Head of caudate nucleus (tissue), 42 donors: ENCODE measurements at regions of chr15 and their contacts with region 1.

Region 1: DNA sequence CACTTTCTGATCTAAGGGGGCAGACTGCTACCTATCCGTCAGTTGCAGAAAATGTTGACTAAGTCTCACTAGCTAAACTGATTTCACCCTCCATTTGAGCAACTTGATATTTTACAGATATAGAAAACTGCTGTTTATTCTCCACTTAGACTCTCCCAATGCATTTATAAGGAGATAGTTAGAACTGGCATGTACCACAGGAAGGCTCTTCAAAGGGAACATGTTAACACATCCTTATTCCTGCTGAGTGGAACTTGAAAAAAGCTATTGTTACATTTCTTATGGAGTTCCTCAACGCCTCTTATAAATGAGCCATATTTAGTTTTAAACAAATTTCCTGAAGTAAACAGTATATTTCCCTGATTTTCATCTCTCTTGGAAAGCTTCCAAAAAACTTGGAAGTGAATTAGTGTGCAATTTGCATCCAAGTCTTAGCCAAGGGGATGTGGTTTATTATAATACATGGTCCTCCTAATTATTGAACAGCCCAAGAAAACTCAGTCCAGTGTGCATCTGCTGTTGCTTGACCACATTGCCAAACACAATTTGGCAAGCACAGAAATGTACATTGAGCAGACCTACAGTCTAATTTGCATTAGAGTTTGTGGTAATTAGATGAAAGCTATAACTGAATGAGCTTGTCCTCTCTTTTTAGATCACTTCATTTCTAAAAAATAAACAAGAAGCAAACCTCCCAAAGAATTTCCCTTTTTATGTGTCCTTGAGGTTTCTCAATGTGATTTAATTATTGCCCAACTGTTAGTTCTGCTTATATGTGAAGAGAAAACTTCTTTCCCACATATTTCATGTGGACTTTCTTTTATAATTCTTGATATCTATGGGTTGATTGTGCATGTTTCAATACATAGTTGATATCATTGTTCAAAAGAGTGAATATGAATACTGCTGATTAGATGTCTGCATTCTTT is 72.6 kb upstream of the DPH6 start:
- DNase-seq: no peak

Region 2: DNA sequence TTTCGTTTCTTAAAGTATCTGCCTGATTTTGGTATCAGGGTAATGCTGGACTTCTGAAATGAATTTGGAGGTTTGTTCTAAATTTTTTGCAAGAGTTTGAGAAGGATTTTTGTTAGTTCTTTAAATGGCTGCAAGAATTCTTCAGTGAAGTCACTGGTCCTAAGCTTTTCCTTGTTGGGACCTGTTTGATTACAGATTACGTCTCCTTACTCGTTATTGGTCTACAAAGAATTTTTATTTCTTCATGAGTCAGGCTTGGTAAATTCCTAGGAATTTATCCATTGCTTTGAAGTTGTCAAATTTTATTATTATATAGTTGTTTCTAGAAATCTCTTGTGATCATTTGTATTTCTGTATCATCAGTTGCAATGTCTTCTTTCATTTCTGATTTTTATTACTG is 268.6 kb before region 1 on chr15:
- intact Hi-C with region 1: no loop called
- DNase-seq: no peak

Region 3: DNA sequence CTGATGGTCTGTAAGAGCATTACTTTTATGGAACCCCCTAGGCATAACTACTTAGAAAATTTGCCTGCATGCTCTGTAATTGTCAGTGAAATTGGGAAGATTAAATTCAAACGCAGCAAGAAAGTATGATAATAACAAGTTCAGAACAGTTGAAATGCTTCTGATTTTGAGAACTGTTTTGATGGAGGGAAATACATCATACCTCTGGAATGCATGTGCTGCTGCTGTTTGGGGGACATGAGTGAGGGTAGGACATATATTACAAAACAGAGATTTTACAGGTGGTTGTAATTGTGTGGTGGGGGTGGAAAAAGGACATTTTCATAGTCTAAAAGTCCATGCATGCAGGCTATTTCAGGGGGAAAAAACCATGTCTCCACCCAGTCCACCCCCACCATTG is 62.4 kb after region 1 on chr15:
- intact Hi-C with region 1: loop called (anchors 10 kb)
- DNase-seq: no peak